CD4-positive, alpha-beta T cell (primary cell): ENCODE measurements at regions of chr2 and their contacts with region 1.

Region 1: DNA sequence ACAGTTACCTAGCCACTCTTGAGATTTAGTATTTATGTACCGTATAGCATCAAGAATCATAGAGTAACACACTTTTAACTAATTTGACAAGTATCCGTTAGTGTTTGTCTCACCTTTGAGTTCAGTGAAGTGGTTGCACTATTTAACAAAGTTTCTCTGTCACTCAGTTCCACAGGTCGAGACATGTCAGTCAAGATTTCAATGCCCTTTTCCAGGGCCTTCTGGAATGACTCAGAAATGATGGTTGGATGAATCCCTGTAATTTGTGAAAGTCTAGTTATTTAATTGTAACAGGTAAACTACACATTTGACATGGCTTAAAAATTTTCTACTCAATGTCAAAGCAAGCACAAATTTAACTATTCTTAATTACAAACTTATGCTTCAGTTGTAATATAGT is 9.7 kb downstream of the CCT4 start:
- DNase-seq: no peak
- ATAC-seq: no peak
- H3K4me3 ChIP-seq: no peak overlapping the region
- H3K4me3 Mint-ChIP-seq: no peak overlapping the region
- H3K27ac ChIP-seq: peak overlapping the region in 1 of 2 donors; percentile 7
- H3K27ac Mint-ChIP-seq: no peak overlapping the region
- H3K4me1 ChIP-seq: no peaks in the 10 kb centered on the region
- H3K4me1 Mint-ChIP-seq: no peaks in the 10 kb centered on the region
- H3K27me3 ChIP-seq: no peaks in the 10 kb centered on the region
- H3K27me3 Mint-ChIP-seq: no peaks in the 10 kb centered on the region
- CTCF ChIP-seq: no peak

Region 2: DNA sequence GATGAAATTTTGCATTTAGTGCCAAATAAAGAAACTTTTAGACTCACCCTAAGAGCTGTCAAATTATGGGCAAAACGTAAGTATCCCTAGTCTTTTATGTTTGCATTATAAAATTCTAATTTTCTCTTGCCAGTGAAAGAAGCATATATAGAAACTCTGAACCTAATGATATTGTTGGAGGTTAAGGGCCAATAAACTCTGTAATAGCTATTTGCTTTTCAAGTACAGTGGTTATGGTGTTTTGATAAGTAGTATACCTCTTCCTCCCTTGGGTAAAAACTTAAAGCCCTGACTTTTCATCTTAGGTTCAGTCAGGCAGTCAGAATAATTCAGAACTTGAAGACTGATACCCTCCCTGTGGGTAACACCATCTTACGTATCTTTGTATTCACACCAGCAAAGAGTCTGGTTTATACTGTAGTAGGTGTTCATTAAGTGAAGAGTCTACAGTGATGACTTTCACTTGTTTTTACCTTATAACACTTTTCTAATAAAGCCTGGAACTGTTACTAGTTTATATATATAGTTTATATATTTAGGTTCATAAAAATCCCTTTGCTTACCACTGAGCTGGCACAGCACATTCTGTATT is 1103.6 kb before region 1 on chr2:
- CTCF ChIA-PET with region 1: no interaction called
- POLR2A ChIA-PET with region 1: no interaction called
- intact Hi-C with region 1: loop called in 1 of 2 experiments (anchors 10 kb)
- DNase-seq: no peak
- ATAC-seq: no peak
- H3K4me3 ChIP-seq: no peak overlapping the region
- H3K4me3 Mint-ChIP-seq: no peak overlapping the region
- H3K27ac ChIP-seq: no peak overlapping the region
- H3K27ac Mint-ChIP-seq: no peak overlapping the region
- H3K4me1 ChIP-seq: no peaks in the 10 kb centered on the region
- H3K4me1 Mint-ChIP-seq: peaks cover 1% of the 10 kb centered on the region
- H3K27me3 ChIP-seq: no peaks in the 10 kb centered on the region
- H3K27me3 Mint-ChIP-seq: no peaks in the 10 kb centered on the region
- CTCF ChIP-seq: no peak

Region 3: DNA sequence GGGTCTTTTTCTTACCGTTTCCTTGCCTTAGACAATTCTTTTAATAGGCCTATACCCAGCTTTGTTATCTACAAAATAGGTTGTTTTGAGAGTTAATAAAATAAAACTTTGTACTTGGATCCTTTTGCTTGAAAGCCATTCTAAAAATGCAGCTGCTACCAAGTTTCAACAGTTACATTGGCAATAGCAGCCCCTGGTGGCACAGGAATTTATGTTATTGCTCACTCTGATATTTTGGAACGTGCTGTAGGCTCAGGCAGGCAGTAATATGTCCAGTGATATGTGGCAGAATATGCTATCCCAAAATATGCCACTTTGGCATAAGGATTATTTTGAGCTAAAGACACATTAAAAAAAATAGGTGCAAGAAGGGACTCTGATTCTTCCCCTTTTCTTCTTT is 20.1 kb after region 1 on chr2:
- CTCF ChIA-PET with region 1: no interaction called
- POLR2A ChIA-PET with region 1: no interaction called
- intact Hi-C with region 1: no loop called
- DNase-seq: peak in 3 of 14 experiments; percentile 19 to 36 (median 36)
- ATAC-seq: peak; percentile 32
- H3K4me3 ChIP-seq: no peak overlapping the region
- H3K4me3 Mint-ChIP-seq: no peak overlapping the region
- H3K27ac ChIP-seq: no peak overlapping the region
- H3K27ac Mint-ChIP-seq: no peak overlapping the region
- H3K4me1 ChIP-seq: no peaks in the 10 kb centered on the region
- H3K4me1 Mint-ChIP-seq: no peaks in the 10 kb centered on the region
- H3K27me3 ChIP-seq: no peaks in the 10 kb centered on the region
- H3K27me3 Mint-ChIP-seq: no peaks in the 10 kb centered on the region
- CTCF ChIP-seq: peak; percentile 28

Region 4: DNA sequence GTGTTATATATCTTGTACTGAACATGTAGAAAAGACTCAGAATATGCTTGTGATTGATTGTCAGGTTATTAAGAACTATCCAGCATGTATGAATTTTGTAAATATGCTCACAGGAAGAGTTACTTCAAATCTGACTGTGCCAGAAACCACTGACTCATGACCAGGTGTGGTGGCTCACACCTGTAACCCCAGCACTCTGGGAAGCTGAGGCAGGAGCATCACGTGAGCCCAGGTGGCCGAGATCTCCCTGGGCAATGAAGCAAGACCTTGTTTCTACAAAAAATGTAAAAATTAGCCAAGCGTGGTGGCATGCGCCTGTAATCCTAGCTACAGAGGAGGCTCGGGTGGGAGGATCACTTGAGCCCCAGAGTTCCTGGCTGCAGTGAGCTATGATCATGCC is 153.3 kb after region 1 on chr2:
- CTCF ChIA-PET with region 1: no interaction called
- POLR2A ChIA-PET with region 1: no interaction called
- intact Hi-C with region 1: no loop called
- DNase-seq: no peak
- ATAC-seq: no peak
- H3K4me3 ChIP-seq: no peak overlapping the region
- H3K4me3 Mint-ChIP-seq: no peak overlapping the region
- H3K27ac ChIP-seq: no peak overlapping the region
- H3K27ac Mint-ChIP-seq: no peak overlapping the region
- H3K4me1 ChIP-seq: no peaks in the 10 kb centered on the region
- H3K4me1 Mint-ChIP-seq: no peaks in the 10 kb centered on the region
- H3K27me3 ChIP-seq: no peaks in the 10 kb centered on the region
- H3K27me3 Mint-ChIP-seq: no peaks in the 10 kb centered on the region
- CTCF ChIP-seq: no peak